ENCODE measurements at regions of chr4 and their contacts with region 1.

Region 1: DNA sequence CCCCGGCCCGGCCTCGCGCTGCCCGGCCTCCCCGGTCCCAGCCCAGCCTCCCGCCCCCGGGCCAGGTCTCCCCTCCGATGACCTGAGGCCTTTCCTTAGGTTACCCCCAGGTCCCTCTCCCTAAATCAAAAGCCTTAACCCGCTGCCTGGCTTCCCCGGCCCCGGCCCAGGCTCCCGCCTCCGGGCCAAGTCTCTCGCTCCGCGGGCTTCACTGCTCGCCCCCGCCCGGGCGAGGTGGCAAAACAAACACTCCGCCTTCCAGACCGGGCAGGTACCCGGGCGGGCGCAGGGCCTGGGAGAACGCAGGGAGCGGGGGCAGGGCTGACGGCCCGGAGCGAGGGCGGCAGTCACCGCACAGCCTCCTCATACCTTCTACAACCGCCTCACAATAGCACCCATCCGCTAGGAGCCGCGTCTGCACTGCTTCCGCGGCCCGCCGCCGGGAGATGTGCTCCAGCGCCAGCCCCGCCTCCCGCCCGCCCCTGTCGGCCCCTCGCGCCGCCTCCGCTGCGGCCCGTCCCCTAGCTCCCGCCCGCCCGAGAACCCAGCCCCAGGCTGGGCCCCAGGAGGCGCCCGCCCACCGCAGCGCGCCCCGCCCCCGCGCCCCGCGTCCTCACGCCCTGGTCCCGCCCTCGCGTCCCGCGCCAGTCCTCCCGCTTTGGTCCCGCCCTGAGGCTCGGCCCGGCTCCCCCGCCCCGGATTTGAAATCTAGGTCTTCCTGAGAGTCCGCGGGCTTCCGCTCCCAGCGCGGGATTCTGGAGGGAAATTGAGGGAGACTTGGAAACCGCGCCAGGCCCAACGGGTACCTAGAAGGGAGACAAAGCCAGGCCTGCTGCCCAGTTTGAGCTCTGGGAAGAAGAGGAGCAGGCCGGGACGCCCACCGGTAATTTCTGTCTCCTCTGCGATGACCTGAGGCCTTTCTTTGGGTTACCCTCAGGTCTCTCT is at the starts of genes CASP3 and PRIMPOL:
- DNase-seq: peak; percentile 97
- H3K4me3 ChIP-seq: peak within 1 kb of the TSS; percentile 77 to 91 (median 89)
- H3K27ac ChIP-seq: peak within 1 kb of the TSS; percentile 98 to 100 (median 99)
- H3K4me1 ChIP-seq: peaks cover 20 to 54% (median 36%) of the 10 kb centered on the region in 3 donors
- H3K27me3 ChIP-seq: no peaks in the 10 kb centered on the region
- CTCF ChIP-seq: peak in 1 of 6 experiments; percentile 35
- POLR2A ChIP-seq: peak in 2 of 4 donors; percentile 91 to 95
- total RNA-seq, gene CASP3: 22.9 to 48.0 (median 28.5) TPM
- total RNA-seq, gene PRIMPOL: 4.5 to 15.6 (median 10.8) TPM

Region 2: DNA sequence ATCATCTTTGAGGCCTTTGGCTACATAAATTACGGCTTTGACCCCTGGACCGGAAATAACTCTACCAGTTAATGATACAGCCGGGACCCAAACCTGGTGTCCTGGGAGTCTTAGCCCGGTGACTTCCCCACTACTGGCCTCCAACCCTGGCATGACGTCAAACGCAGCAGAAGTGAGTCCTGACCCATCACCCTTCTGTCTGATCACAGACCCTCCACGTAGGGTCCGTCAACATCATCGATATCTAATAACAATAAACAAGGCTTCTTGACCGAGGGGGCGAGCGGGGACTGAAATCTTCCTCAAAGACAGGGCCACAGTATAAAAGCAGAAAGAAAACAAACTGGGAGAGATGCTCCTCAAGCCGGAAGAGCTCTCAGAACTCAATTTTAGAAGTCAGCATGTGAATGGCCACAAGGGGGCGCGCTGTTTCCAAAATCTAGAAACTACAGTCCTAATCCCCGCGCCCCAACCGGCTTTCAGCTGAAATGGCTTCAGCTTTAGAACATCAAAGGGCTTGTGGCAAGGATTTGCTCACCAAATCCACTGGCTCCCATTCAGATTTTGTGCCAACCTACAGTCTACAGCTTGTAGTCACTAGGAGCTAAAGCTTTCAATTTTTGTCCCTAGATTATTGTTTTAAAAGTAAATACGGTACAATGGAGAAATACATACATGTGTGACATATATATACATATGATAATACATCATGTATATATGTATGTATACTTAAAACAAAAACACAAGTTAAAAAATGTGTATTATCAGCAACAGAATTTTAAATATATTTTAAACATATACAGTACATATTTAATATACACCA is 385.2 kb before region 1 on chr4:
- intact Hi-C with region 1: loop called (anchors 10 kb)
- DNase-seq: peak; percentile 56
- H3K4me3 ChIP-seq: no peak overlapping the region
- H3K27ac ChIP-seq: no peak overlapping the region
- H3K4me1 ChIP-seq: peaks cover 0 to 18% (median 15%) of the 10 kb centered on the region in 3 donors
- H3K27me3 ChIP-seq: no peaks in the 10 kb centered on the region
- CTCF ChIP-seq: peak; percentile 91 to 96 (median 93)
- POLR2A ChIP-seq: no peak

Region 3: GRCh38 chr4:184722798-184723197 is 73.5 kb after region 1 on chr4:
- intact Hi-C with region 1: no loop called
- DNase-seq: no peak
- H3K4me3 ChIP-seq: no peak overlapping the region
- H3K27ac ChIP-seq: no peak overlapping the region
- H3K4me1 ChIP-seq: no peaks in the 10 kb centered on the region
- H3K27me3 ChIP-seq: no peaks in the 10 kb centered on the region
- CTCF ChIP-seq: peak in 1 of 6 experiments; percentile 43
- POLR2A ChIP-seq: no peak

Region 4: GRCh38 chr4:184745831-184746795 is 96.8 kb after region 1 on chr4:
- intact Hi-C with region 1: loop called (anchors 10 kb)
- DNase-seq: no peak
- H3K4me3 ChIP-seq: peak overlapping the region in 1 of 4 donors; percentile 34
- H3K27ac ChIP-seq: peak overlapping the region; percentile 84 to 95 (median 89)
- H3K4me1 ChIP-seq: peaks cover 34 to 48% (median 35%) of the 10 kb centered on the region in 3 donors
- H3K27me3 ChIP-seq: no peaks in the 10 kb centered on the region
- CTCF ChIP-seq: peak; percentile 49 to 84 (median 80)
- POLR2A ChIP-seq: no peak

Region 5: GRCh38 chr4:184792950-184793555 is 143.8 kb after region 1 on chr4:
- intact Hi-C with region 1: no loop called
- DNase-seq: no peak
- H3K4me3 ChIP-seq: no peak overlapping the region
- H3K27ac ChIP-seq: peak overlapping the region; percentile 20 to 57 (median 48)
- H3K4me1 ChIP-seq: peaks cover 4 to 16% (median 5%) of the 10 kb centered on the region in 3 donors
- H3K27me3 ChIP-seq: no peaks in the 10 kb centered on the region
- CTCF ChIP-seq: no peak
- POLR2A ChIP-seq: no peak

Region 6: GRCh38 chr4:184994010-184994622 is 344.8 kb after region 1 on chr4:
- intact Hi-C with region 1: no loop called
- DNase-seq: no peak
- H3K4me3 ChIP-seq: no peak overlapping the region
- H3K27ac ChIP-seq: no peak overlapping the region
- H3K4me1 ChIP-seq: no peaks in the 10 kb centered on the region
- H3K27me3 ChIP-seq: peaks cover 0 to 28% (median 0%) of the 10 kb centered on the region in 4 donors
- CTCF ChIP-seq: no peak
- POLR2A ChIP-seq: no peak